HEK293 (cell line): ENCODE measurements at regions of chr16 and their contacts with region 1.

Region 1: GRCh38 chr16:80526425-80527061 is 14.2 kb upstream of the DYNLRB2 start:
- H3K4me3 ChIP-seq: no peak overlapping the region
- H3K27ac ChIP-seq: no peak overlapping the region
- H3K4me1 ChIP-seq: no peaks in the 10 kb centered on the region
- CTCF ChIP-seq: peak; percentile 54

Region 2: GRCh38 chr16:80447241-80447640 is 79.3 kb before region 1 on chr16:
- CTCF ChIA-PET with region 1: no interaction called
- POLR2A ChIA-PET with region 1: no interaction called
- H3K4me3 ChIP-seq: no peak overlapping the region
- H3K27ac ChIP-seq: no peak overlapping the region
- H3K4me1 ChIP-seq: no peaks in the 10 kb centered on the region
- CTCF ChIP-seq: no peak

Region 3: GRCh38 chr16:80511824-80512592 is 14.5 kb before region 1 on chr16:
- CTCF ChIA-PET with region 1: interaction called, 21 read pairs
- POLR2A ChIA-PET with region 1: no interaction called
- H3K4me3 ChIP-seq: no peak overlapping the region
- H3K27ac ChIP-seq: no peak overlapping the region
- H3K4me1 ChIP-seq: no peaks in the 10 kb centered on the region
- CTCF ChIP-seq: no peak

Region 4: GRCh38 chr16:80806957-80807356 is 280.4 kb after region 1 on chr16:
- CTCF ChIA-PET with region 1: interaction called, 13 read pairs
- POLR2A ChIA-PET with region 1: no interaction called
- H3K4me3 ChIP-seq: no peak overlapping the region
- H3K27ac ChIP-seq: no peak overlapping the region
- H3K4me1 ChIP-seq: no peaks in the 10 kb centered on the region
- CTCF ChIP-seq: no peak

Region 5: GRCh38 chr16:80824718-80825364 is 298.3 kb after region 1 on chr16:
- CTCF ChIA-PET with region 1: interaction called, 113 read pairs
- POLR2A ChIA-PET with region 1: interaction called, 3 read pairs
- H3K4me3 ChIP-seq: no peak overlapping the region
- H3K27ac ChIP-seq: no peak overlapping the region
- H3K4me1 ChIP-seq: no peaks in the 10 kb centered on the region
- CTCF ChIP-seq: 0 out of 2 replicates have a peak, but pooled peaks have one; percentile 21

Region 6: DNA sequence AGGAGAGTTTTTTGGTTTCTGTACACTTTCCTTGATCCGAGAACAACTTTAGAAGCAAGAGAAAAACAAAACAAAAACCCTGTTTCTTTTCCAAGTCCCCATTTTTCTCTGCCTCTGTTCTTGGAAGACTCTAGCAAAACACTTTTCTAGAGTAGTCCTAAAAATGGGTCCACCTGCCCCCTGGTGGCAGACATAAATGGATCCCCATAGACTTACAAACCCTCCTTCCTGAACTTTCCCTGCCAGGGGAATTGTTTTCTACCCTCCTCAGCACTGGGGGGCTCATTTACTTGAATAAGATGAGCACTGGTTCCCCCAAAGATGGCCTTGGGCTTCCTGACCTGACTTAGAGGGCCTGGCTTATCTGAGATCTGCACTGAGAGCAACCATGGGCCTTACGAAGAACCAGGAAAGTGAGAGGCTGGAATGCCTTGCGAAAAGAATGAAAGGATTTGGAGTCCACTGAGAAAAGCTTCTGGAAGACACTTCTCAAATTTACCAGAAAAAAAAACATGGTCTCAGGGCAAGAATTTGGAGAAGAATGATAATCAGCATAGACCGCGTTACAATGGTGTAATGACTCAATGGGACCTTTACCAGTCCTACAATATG is 325.8 kb after region 1 on chr16:
- CTCF ChIA-PET with region 1: interaction called, 37 read pairs
- POLR2A ChIA-PET with region 1: no interaction called
- H3K4me3 ChIP-seq: no peak overlapping the region
- H3K27ac ChIP-seq: no peak overlapping the region
- H3K4me1 ChIP-seq: no peaks in the 10 kb centered on the region
- CTCF ChIP-seq: peak; percentile 34; the same call in 1 of the 2 replicates